Activated CD4-positive, alpha-beta T cell treated with anti-CD3 and anti-CD28 coated beads for 36 hours (primary cell): ENCODE measurements at regions of chr7 and their contacts with region 1.

Region 1: GRCh38 chr7:151057989-151058780 is 488 bp upstream of the CDK5 start:
- DNase-seq: peak; percentile 98
- ATAC-seq: peak; percentile 96
- H3K4me3 Mint-ChIP-seq: peak overlapping the region; percentile 81
- H3K27ac Mint-ChIP-seq: peak overlapping the region; percentile 94
- H3K4me1 Mint-ChIP-seq: peaks cover 28% of the 10 kb centered on the region
- H3K27me3 Mint-ChIP-seq: no peaks in the 10 kb centered on the region

Region 2: DNA sequence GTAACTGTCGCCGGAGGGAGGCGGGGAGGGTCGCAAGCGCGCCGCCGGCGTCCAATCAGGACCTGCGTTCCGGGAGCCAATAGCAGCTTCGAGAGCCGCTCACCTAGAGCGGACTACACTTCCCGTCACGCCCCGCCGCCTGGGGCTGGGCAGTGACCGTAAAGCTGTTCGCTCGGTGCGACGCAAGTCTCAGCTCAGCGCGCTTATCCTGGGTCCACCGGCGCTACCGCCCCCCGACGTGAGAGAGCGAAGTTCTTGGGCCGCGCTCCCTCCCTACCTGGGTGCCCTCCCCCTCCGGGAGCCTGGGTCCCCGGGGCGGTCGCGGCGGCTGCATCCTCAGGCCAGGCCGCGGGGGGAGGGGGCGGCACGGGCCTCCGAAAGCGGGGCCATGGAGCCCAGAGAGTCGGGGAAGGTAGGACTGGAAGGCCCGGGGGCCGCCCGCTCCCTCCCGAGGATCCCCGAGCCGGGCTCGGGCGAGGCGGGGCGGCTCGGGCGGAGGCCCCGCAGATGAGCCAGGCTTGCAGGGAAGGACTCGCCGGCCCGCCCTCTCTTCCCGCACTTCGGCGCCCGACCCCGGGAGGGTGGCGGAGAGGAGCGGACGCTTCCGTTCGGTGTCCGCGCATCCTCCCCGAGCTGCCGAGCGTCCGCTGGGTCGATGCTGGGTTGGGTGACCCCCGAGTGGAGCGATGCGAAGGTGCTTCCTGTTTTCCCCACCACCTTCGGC is 1219.8 kb before region 1 on chr7 and contains the start of gene ZNF862:
- CTCF ChIA-PET with region 1: no interaction called
- POLR2A ChIA-PET with region 1: no interaction called
- intact Hi-C with region 1: loop called in 1 of 2 experiments (anchors 2 kb)
- DNase-seq: peak; percentile 98
- ATAC-seq: peak; percentile 98
- H3K4me3 Mint-ChIP-seq: peak within 1 kb of the TSS; percentile 78
- H3K27ac Mint-ChIP-seq: peak within 1 kb of the TSS; percentile 74
- H3K4me1 Mint-ChIP-seq: peaks cover 28% of the 10 kb centered on the region
- H3K27me3 Mint-ChIP-seq: no peaks in the 10 kb centered on the region
- total RNA-seq, gene ZNF862: 17.6 to 18.3 TPM

Region 3: GRCh38 chr7:150378853-150379440 is 679.2 kb before region 1 on chr7 and contains the start of gene ZNF775:
- CTCF ChIA-PET with region 1: no interaction called
- POLR2A ChIA-PET with region 1: no interaction called
- intact Hi-C with region 1: loop called in 1 of 2 experiments (anchors 5 kb)
- DNase-seq: peak; percentile 96
- ATAC-seq: peak; percentile 98
- H3K4me3 Mint-ChIP-seq: peak within 1 kb of the TSS; percentile 81
- H3K27ac Mint-ChIP-seq: peak within 1 kb of the TSS; percentile 63
- H3K4me1 Mint-ChIP-seq: peaks cover 53% of the 10 kb centered on the region
- H3K27me3 Mint-ChIP-seq: no peaks in the 10 kb centered on the region
- total RNA-seq, gene ZNF775: 3.9 to 5.1 TPM

Region 4: GRCh38 chr7:150845421-150845861 is 212.7 kb before region 1 on chr7:
- CTCF ChIA-PET with region 1: no interaction called
- POLR2A ChIA-PET with region 1: no interaction called
- intact Hi-C with region 1: no loop called
- DNase-seq: no peak
- ATAC-seq: no peak
- H3K4me3 Mint-ChIP-seq: no peak overlapping the region
- H3K27ac Mint-ChIP-seq: no peak overlapping the region
- H3K4me1 Mint-ChIP-seq: no peaks in the 10 kb centered on the region
- H3K27me3 Mint-ChIP-seq: peaks cover 4% of the 10 kb centered on the region

Region 5: GRCh38 chr7:151017953-151018420 is 40.2 kb before region 1 on chr7:
- CTCF ChIA-PET with region 1: interaction called, 3 read pairs
- POLR2A ChIA-PET with region 1: no interaction called
- intact Hi-C with region 1: loop called (anchors 1 to 5 kb)
- DNase-seq: peak; percentile 90
- ATAC-seq: peak; percentile 59
- H3K4me3 Mint-ChIP-seq: peak overlapping the region; percentile 66
- H3K27ac Mint-ChIP-seq: peak overlapping the region; percentile 80
- H3K4me1 Mint-ChIP-seq: peaks cover 47% of the 10 kb centered on the region
- H3K27me3 Mint-ChIP-seq: peaks cover 9% of the 10 kb centered on the region

Region 6: GRCh38 chr7:151038951-151039849 is 19.0 kb before region 1 on chr7:
- CTCF ChIA-PET with region 1: interaction called, 3 read pairs
- POLR2A ChIA-PET with region 1: no interaction called
- intact Hi-C with region 1: loop called in 1 of 2 experiments (anchors 1 kb)
- DNase-seq: peak; percentile 88
- ATAC-seq: peak; percentile 94
- H3K4me3 Mint-ChIP-seq: peak overlapping the region; percentile 10
- H3K27ac Mint-ChIP-seq: peak overlapping the region; percentile 85
- H3K4me1 Mint-ChIP-seq: peaks cover 17% of the 10 kb centered on the region
- H3K27me3 Mint-ChIP-seq: no peaks in the 10 kb centered on the region

Region 7: GRCh38 chr7:151110941-151111645 is 52.9 kb after region 1 on chr7:
- CTCF ChIA-PET with region 1: interaction called, 5 read pairs
- POLR2A ChIA-PET with region 1: no interaction called
- intact Hi-C with region 1: loop called in 1 of 2 experiments (anchors 1 kb)
- DNase-seq: peak; percentile 85
- ATAC-seq: peak; percentile 90
- H3K4me3 Mint-ChIP-seq: no peak overlapping the region
- H3K27ac Mint-ChIP-seq: no peak overlapping the region
- H3K4me1 Mint-ChIP-seq: no peaks in the 10 kb centered on the region
- H3K27me3 Mint-ChIP-seq: peaks cover 3% of the 10 kb centered on the region